ENCODE measurements at regions of chr13 and their contacts with region 1.

Region 1: GRCh38 chr13:97004096-97004876 is 10.0 kb upstream of the OXGR1 start:
- DNase-seq: no peak
- H3K4me3 ChIP-seq: no peak overlapping the region
- H3K4me3 Mint-ChIP-seq: no peak overlapping the region
- H3K27ac ChIP-seq: no peak overlapping the region
- H3K27ac Mint-ChIP-seq: no peak overlapping the region
- H3K4me1 ChIP-seq: no peaks in the 10 kb centered on the region
- H3K4me1 Mint-ChIP-seq: no peaks in the 10 kb centered on the region
- H3K27me3 ChIP-seq: no peaks in the 10 kb centered on the region
- H3K27me3 Mint-ChIP-seq: peaks cover 8 to 24% of the 10 kb centered on the region in 2 donors

Region 2: GRCh38 chr13:97018029-97018831 is 13.9 kb after region 1 on chr13:
- CTCF ChIA-PET with region 1: interaction called, 12 read pairs
- POLR2A ChIA-PET with region 1: no interaction called
- DNase-seq: peak in 4 of 5 donors; percentile 8 to 52 (median 24)
- H3K4me3 ChIP-seq: no peak overlapping the region
- H3K4me3 Mint-ChIP-seq: no peak overlapping the region
- H3K27ac ChIP-seq: no peak overlapping the region
- H3K27ac Mint-ChIP-seq: peak overlapping the region in 1 of 8 donors; percentile 48
- H3K4me1 ChIP-seq: no peaks in the 10 kb centered on the region
- H3K4me1 Mint-ChIP-seq: peaks cover 7 to 9% (median 7%) of the 10 kb centered on the region in 3 donors
- H3K27me3 ChIP-seq: no peaks in the 10 kb centered on the region
- H3K27me3 Mint-ChIP-seq: peaks cover 12 to 67% of the 10 kb centered on the region in 2 donors

Measured in CD8-positive, alpha-beta memory T cell (primary cell).